Activated CD4-positive, alpha-beta memory T cell treated with anti-CD3 and anti-CD28 coated beads for 36 hours (primary cell): ENCODE measurements at regions of chr2 and their contacts with region 1.

Region 1: DNA sequence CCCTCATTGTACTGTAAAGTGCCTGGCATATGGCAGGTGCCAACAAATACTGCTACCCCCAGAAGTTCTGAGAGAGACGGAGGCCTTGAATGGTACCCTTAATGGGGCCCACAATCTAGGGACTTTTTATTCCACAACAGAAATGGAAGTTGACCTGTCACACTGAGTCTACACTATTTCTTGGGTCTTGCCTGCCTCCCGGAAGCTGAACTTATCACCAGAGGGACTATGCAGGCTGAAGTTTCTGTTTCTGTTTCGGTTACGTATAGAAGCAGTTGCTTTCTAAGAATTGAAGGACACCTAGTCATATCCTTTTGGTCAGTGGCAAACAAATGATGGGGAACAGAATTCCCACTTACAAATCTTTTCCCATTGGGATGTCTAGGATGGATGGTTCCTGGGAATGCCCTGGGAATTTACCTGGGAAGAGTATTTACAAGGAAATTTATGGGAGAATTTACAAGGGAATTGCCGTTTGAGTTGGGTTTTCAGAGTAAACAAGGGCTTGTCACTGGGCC is 74.2 kb downstream of the HS1BP3 start:
- DNase-seq: peak; percentile 55
- H3K4me3 Mint-ChIP-seq: peak overlapping the region; percentile 11
- H3K27ac Mint-ChIP-seq: peak overlapping the region; percentile 86
- H3K4me1 Mint-ChIP-seq: peaks cover 32% of the 10 kb centered on the region
- H3K27me3 Mint-ChIP-seq: no peaks in the 10 kb centered on the region

Region 2: DNA sequence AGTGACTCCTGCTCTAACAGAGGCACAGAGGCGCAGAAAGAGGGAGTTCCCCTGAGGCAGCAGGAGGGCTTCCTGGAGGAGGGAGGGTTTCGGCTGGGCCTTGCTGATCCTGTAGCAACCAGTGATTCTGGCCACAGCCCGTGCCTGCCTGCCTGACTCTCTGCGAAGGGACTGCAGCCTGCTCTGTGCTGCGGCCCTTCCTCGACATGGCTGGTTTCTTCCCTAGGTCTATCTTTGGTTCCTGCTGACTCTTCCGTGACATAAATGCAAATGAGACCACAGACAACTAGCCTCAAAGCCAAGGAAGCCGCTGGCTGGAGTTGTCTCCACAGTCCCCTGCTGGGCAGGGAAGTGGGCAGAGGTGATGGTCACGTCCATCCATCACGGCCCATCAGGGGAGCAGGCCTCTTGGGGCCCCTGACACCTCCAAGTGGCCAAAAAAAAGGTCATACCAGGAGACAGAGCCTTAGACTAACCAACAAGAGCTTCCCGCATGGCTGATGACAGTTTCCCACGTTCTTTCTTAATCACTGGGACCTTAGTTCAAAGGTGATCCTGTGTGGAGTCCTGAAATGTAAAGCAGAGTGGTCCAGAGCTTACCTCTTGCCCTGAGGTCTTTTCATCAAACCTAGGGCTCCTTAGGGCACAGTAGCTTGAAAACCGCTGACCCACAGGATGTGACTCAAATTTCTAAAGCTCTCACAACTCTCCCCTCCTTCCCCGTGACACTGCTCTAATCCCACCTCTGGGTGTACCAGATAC is 19.0 kb after region 1 on chr2:
- CTCF ChIA-PET with region 1: no interaction called
- POLR2A ChIA-PET with region 1: interaction called, 3 read pairs
- intact Hi-C with region 1: loop called (anchors 1 kb)
- DNase-seq: peak; percentile 40
- H3K4me3 Mint-ChIP-seq: no peak overlapping the region
- H3K27ac Mint-ChIP-seq: peak overlapping the region; percentile 79
- H3K4me1 Mint-ChIP-seq: peaks cover 5% of the 10 kb centered on the region
- H3K27me3 Mint-ChIP-seq: no peaks in the 10 kb centered on the region

Region 3: DNA sequence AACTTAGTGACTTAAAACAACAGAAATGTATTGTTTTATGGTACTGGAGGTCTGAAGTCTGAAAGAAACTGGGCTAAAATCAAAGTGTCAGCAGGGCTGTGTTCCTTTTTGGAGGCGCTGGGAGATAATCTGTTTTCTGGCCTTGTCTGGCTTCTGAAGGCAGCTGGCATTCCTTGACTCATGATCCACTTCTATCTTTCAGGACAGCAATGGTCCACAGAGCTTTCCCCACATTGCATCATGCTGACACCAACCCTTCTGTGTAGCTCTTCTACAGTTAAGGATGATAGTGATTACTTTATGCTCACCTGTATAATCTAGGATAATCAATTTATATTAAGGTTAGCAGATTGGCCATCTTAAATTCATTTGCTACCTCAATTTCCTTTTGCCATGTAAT is 939.2 kb after region 1 on chr2:
- CTCF ChIA-PET with region 1: no interaction called
- POLR2A ChIA-PET with region 1: no interaction called
- intact Hi-C with region 1: no loop called
- DNase-seq: no peak
- H3K4me3 Mint-ChIP-seq: no peak overlapping the region
- H3K27ac Mint-ChIP-seq: no peak overlapping the region
- H3K4me1 Mint-ChIP-seq: no peaks in the 10 kb centered on the region
- H3K27me3 Mint-ChIP-seq: no peaks in the 10 kb centered on the region